ENCODE measurements at regions of chr4 and their contacts with region 1.

Region 1: GRCh38 chr4:182478475-182478874 is 235.3 kb downstream of the TENM3 start:
- DNase-seq: no peak
- H3K4me3 Mint-ChIP-seq: no peak overlapping the region
- H3K27ac Mint-ChIP-seq: no peak overlapping the region
- H3K4me1 Mint-ChIP-seq: no peaks in the 10 kb centered on the region
- H3K27me3 Mint-ChIP-seq: peaks cover 2% of the 10 kb centered on the region

Region 2: GRCh38 chr4:182367153-182367552 is 111.3 kb before region 1 on chr4:
- intact Hi-C with region 1: no loop called
- DNase-seq: no peak
- H3K4me3 Mint-ChIP-seq: no peak overlapping the region
- H3K27ac Mint-ChIP-seq: no peak overlapping the region
- H3K4me1 Mint-ChIP-seq: no peaks in the 10 kb centered on the region
- H3K27me3 Mint-ChIP-seq: no peaks in the 10 kb centered on the region

Region 3: GRCh38 chr4:182925298-182925738 is 446.8 kb after region 1 on chr4:
- intact Hi-C with region 1: loop called (anchors 1 kb)
- DNase-seq: peak; percentile 84
- H3K4me3 Mint-ChIP-seq: no peak overlapping the region
- H3K27ac Mint-ChIP-seq: no peak overlapping the region
- H3K4me1 Mint-ChIP-seq: peaks cover 2% of the 10 kb centered on the region
- H3K27me3 Mint-ChIP-seq: peaks cover 27% of the 10 kb centered on the region